Sciatic nerve (tissue), 2 donors: ENCODE measurements at regions of chr22 and their contacts with region 1.

Region 1: DNA sequence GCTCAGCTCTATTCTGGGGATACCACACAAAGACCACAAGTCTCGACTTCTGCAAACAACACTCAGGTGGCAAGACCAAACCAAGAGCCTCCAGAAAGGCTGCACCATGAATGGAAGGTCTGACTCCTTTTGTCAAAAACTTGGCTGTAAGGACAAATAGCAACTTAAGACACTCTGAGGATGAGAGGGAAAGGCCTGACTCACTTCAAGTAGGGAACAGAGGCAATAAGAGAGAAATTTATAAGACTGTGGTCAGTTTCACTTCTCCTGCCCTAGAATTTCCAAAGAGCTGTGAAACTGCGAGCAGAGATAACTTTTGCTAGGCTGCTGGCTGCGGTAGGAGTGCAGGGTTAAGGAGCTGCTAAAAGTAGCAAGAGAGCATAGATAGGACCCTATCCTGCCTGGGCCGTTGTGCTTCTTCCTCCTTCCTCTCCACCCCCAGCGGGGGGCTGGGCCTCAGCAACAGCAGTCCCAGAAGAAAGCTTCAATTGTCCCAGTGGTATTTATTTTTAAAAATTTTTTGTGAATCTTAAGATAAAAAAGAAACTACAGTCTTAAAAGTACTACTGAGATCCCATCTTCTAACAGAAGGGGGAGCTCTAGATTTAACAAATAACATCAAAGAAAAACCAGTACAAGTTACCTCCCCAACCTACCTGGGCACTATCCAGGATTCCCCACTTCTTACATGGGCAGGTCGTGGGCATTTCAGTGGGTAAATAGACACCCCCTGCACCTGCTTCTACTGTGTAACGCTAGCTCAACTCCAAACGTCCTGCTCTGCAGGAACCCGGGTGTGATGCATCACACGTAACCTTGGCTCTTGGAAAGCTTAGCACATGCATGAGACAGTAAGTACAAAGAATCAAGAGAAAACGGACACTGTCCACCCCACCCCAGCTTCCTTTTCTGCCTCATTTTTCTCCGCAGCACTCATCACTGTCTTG is 66.4 kb downstream of the SGSM3 start:
- DNase-seq: no peak
- ATAC-seq: peak; percentile 82

Region 2: DNA sequence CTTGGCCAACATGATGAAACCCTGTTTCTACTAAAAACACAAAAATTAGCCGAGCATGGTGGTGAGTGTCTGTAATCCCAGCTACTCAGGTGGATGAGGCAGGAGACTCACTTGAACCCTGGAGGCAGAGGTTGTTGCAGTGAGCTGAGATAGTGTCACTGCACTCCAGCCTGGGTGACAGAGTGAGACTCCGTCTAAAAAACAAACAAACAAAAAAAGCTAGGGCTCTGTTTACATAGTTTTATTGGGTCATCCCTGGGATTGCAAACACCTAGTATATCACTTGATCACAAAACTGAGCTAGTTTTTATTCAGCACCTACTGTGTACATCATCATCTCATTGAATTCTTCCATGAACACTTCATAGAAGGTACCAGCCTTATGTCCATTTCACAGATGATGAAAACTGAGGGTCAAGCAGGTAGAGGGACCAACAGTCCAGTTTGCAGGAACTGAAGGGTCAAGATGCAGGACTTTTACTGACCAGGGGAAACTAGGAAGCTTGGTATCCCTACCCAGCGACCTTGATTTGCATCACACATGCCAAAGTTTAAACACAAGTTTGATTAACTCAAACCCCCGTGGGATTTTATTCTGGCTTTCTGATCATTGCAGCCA is 208.9 kb after region 1 on chr22:
- intact Hi-C with region 1: loop called (anchors 5 kb)
- DNase-seq: no peak
- ATAC-seq: no peak

Region 3: GRCh38 chr22:40679964-40680818 is 243.4 kb after region 1 on chr22:
- intact Hi-C with region 1: no loop called
- DNase-seq: no peak
- ATAC-seq: no peak